Left cardiac atrium (tissue), 4 donors: ENCODE measurements at regions of chr9 and their contacts with region 1.

Region 1: GRCh38 chr9:27276193-27277030 is 20.5 kb downstream of the EQTN start:
- DNase-seq: no peak
- ATAC-seq: peak in 1 of 2 donors; percentile 53

Region 2: GRCh38 chr9:27033823-27034403 is 242.5 kb before region 1 on chr9:
- intact Hi-C with region 1: loop called (anchors 2 to 10 kb)
- DNase-seq: peak; percentile 42
- ATAC-seq: peak in 1 of 2 donors; percentile 65

Region 3: DNA sequence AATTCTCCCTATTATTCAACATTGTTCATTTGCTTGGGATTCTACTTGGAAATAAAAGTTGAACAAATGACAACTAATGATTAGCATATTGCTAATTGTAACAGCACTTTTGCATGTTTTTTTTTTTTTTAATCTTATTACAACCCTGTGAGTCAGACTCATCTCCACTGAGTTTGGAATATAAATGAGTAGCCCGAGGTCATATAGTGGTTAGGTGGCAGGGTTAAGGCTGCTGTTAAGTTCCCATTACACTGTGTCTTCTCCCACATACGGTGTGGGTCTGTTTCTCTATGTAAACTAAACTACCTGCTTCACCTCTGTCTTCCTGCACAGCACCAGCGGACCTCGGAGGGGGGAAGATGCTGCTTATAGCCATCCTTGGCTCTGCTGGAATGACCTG is 71.8 kb before region 1 on chr9:
- intact Hi-C with region 1: no loop called
- DNase-seq: no peak
- ATAC-seq: no peak

Region 4: GRCh38 chr9:27573634-27574590 is 297.5 kb after region 1 on chr9:
- intact Hi-C with region 1: no loop called
- DNase-seq: peak; percentile 96
- ATAC-seq: peak; percentile 90 to 91